Posterior cingulate gyrus (tissue), 11 donors: ENCODE measurements at regions of chr11 and their contacts with region 1.

Region 1: DNA sequence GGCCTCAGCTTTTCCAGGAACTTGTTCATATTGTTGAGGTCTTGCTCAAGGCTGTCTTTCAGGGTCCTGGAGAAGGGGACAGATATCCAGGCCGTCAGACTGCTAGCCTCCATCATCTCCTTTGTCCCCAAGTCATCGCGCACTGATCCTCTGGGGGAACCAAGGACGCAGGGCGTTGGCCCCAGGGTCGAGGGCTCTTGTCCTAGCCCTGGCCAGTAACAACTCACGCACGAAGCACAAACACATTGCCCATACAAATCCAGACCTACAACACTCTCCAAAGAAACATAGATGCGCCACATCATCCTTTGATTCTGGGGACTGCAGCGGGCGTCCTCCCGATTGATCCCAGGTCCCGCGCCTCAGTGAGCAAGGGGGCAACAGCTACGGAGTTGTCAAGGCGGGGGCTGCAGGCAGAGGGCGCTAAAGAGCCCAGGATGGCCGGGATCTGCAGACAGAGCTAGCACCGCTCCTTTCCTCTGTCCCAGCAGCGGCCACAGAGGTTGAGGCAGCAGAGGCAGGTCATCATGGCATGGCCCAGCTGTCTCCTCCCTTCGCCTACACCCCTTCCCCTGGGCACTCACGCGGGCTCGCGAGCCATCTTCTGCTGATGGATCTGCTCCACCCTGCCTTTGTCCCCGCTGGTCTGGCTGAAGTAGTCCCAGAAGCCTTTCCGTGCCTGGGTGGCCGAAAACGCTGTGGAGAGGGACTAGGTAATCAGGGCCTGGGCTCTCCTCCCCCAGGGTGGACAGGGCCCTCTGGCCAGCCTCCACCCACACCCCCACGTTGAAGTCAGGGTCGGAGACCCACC is 472 bp downstream of the APOA5 start:
- DNase-seq: peak; percentile 65 to 97 (median 88)

Region 2: DNA sequence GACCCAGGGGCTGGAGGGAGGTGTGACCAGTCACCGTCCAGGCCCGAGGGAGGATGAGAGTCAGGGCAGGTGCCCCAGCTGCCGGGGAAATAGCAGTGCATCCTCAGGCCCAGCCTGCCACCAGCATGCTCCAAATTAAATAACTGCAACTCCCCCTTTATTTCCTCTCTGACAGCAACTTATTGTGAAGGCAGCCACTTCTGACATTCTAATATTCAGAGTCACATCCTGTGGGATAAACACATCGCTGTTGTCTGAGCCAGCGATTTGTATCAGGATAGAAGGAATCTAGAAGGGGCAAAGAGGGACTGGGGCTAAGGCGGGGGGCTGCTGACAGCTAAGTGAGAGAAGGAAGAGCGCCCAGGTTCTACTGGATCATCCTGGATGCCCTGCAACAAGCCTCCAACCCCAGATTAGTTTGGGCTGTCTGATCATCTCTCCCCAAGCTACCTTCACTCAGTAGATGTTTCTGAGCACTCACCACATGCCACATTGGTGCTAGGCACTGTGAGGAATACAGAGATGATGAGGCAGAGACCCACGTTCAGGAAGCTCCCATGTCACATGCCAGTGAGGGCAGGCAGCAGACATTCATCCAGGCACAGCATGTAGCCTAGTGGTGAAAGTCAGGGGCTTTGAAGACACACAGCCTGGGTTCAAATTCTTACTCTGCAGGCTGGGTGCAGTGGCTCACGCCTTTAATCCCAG is 232.5 kb before region 1 on chr11:
- intact Hi-C with region 1: no loop called
- DNase-seq: peak in 1 of 10 donors; percentile 33

Region 3: GRCh38 chr11:116835791-116836631 is 44.8 kb after region 1 on chr11:
- intact Hi-C with region 1: loop called (anchors 5 kb)
- DNase-seq: peak; percentile 58 to 98 (median 84)

Region 4: DNA sequence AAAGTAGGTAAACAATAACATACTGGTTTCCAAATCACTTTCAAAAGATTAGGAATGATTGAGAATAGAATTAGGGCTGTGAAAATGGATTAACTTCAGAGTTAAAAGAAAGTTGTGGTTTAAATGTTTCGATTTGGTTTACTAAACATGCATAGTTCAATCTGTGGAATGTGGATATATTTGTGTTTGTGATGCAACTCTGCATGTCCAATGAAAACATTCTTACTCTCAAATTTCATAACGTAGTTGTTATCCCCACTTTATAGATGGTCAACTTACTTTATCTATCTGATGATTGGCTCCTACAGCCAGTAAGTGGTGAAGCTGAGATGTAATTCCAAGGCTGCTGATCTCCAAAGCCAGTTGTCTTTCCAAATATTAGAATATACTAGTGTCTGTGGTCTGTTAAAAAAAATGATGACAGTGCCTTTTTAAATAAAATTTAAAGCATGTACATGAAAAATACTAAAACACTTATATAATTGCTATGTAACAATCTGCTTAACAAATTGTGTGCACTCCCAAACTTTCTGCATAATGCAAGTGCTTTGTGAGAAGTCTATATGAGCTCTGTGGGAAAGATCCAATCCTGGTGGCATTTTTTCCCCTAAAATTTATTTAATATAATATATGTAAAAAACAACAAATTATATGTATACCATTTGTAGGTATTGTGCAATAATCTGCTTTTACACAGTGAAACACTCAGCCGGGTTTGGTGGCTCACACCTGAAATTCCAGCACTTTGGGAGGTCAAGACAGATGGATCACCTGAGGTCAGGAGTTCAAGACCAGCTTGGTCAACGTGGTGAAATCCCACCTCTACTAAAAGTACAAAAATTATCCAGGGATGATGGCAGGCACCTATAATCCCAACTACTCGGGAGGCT is 316.7 kb after region 1 on chr11:
- intact Hi-C with region 1: loop called (anchors 1 kb)
- DNase-seq: no peak

Region 5: GRCh38 chr11:117226388-117227385 is 435.5 kb after region 1 on chr11:
- intact Hi-C with region 1: loop called (anchors 5 kb)
- DNase-seq: peak in 6 of 10 donors; percentile 31 to 87 (median 43)